ENCODE measurements at regions of chr19 and their contacts with region 1.

Region 1: GRCh38 chr19:49869441-49870176 is 2.2 kb upstream of the PNKP start:
- DNase-seq: peak; percentile 85 to 99 (median 98)
- H3K4me3 ChIP-seq: peak overlapping the region; percentile 52 to 94 (median 70)
- H3K27ac ChIP-seq: peak overlapping the region; percentile 86 to 99 (median 96)
- H3K27me3 ChIP-seq: no peaks in the 10 kb centered on the region
- CTCF ChIP-seq: peak in 45 of 56 donors; percentile 10 to 68 (median 39)

Region 2: GRCh38 chr19:49817964-49818648 is 51.5 kb before region 1 on chr19 and contains the start of gene MED25:
- intact Hi-C with region 1: loop called in 1 of 2 experiments (anchors 2 kb)
- DNase-seq: peak; percentile 67 to 92 (median 78)
- H3K4me3 ChIP-seq: peak within 1 kb of the TSS; percentile 58 to 98 (median 88)
- H3K27ac ChIP-seq: peak within 1 kb of the TSS; percentile 89 to 100 (median 98)
- H3K27me3 ChIP-seq: no peaks in the 10 kb centered on the region
- CTCF ChIP-seq: peak in 49 of 56 donors; percentile 17 to 64 (median 46)
- total RNA-seq, gene MED25: 42.6 to 78.6 (median 57.7) TPM

Region 3: GRCh38 chr19:49916842-49917733 is 47.5 kb after region 1 on chr19:
- intact Hi-C with region 1: no loop called
- DNase-seq: peak in 1 of 10 donors; percentile 20
- H3K4me3 ChIP-seq: no peak overlapping the region
- H3K27ac ChIP-seq: peak overlapping the region in 12 of 59 donors; percentile 4 to 53 (median 30)
- H3K27me3 ChIP-seq: no peaks in the 10 kb centered on the region
- CTCF ChIP-seq: peak in 28 of 56 donors; percentile 13 to 38 (median 30)